Activated CD4-positive, alpha-beta memory T cell treated with anti-CD3 and anti-CD28 coated beads, Interleukin-2, amount 10 ng/mL, durations not matched to agents 7 days and 5 days (primary cell): ENCODE measurements at regions of chr11 and their contacts with region 1.

Region 1: GRCh38 chr11:9506489-9507276 is 45.9 kb downstream of the ZNF143 start:
- DNase-seq: peak; percentile 78
- H3K4me3 Mint-ChIP-seq: no peak overlapping the region
- H3K27ac Mint-ChIP-seq: no peak overlapping the region
- H3K4me1 Mint-ChIP-seq: peaks cover 12% of the 10 kb centered on the region
- H3K27me3 Mint-ChIP-seq: no peaks in the 10 kb centered on the region

Region 2: DNA sequence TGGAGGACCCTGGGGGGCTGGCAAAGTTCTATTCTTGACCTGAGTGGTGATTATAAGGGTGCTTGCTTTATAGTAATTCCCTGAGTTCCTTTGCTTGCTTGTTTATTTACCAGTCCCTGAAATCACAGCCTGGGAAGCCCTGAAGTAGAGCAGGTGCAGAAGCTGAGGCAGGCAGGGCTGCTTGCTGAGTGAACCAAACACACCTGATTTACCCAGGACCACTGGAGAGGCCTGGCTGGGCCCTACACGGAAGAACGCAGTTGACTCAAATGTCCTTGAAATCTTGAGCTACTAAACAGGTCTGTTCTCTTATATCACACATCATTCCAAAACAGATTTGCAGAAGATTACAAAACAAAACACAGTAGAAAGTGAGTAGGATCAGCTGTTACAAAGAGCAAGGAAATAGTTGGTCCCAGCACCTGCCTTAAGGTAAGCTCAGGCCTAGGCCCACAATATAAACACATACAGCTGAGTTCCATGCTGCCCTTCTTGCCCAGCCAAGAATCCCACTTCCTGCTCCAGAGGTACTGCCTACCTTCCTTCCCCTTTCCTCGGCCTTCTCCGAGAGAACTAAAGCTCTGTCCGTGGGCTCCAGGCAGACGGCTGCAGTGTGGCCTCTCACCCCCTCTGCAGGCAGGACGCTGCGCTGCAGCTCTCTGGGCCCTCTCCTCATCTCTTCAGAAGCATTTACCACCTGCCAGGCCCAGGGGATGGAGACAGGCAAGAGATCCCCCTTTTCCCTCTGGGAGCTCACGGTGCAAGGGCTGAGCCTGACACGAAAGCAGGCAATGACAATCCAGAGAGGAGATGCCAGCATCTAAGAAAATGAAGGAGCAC is 369.2 kb before region 1 on chr11:
- CTCF ChIA-PET with region 1: interaction called, 21 read pairs
- POLR2A ChIA-PET with region 1: no interaction called
- DNase-seq: peak; percentile 78
- H3K4me3 Mint-ChIP-seq: no peak overlapping the region
- H3K27ac Mint-ChIP-seq: no peak overlapping the region
- H3K4me1 Mint-ChIP-seq: peaks cover 36% of the 10 kb centered on the region
- H3K27me3 Mint-ChIP-seq: no peaks in the 10 kb centered on the region

Region 3: DNA sequence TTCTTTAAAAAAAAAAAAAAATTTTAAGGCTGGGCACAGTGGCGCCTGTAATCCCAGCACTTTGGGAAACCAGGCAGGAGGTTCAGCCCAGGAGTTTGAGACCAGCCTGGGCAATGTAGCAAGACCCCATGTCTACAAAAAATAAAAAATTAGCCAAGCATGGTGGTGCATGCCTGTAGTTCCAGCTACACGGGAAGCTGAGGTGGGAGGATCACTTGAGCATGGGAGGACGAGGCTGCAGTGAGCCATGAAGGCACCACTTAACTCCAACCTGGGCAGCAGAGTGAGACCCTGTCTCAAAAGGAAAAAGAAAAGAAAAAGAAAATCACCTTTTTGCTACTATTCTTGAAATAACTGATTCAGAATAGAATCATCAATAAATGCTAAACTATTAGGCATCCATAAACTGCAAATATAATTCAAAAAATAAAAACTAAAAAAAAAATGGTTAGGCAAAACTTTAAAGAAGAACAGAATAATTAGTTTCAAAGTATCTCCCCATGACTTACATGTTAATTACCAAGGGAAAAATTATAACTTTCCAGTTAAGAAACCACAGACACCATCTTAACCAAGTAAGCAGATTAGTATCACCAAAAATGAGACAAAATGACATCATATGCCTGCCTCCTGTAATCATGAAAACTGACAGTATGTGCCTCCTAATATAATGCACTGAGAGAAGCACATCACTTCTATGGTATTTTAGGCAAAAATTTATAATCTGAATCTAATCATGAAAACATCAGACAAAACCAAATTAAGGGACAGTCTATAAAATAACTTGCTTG is 305.1 kb before region 1 on chr11:
- CTCF ChIA-PET with region 1: no interaction called
- POLR2A ChIA-PET with region 1: no interaction called
- DNase-seq: no peak
- H3K4me3 Mint-ChIP-seq: no peak overlapping the region
- H3K27ac Mint-ChIP-seq: no peak overlapping the region
- H3K4me1 Mint-ChIP-seq: peaks cover 11% of the 10 kb centered on the region
- H3K27me3 Mint-ChIP-seq: no peaks in the 10 kb centered on the region

Region 4: GRCh38 chr11:9280655-9281301 is 225.9 kb before region 1 on chr11:
- CTCF ChIA-PET with region 1: interaction called, 14 read pairs
- POLR2A ChIA-PET with region 1: no interaction called
- DNase-seq: peak; percentile 73
- H3K4me3 Mint-ChIP-seq: no peak overlapping the region
- H3K27ac Mint-ChIP-seq: no peak overlapping the region
- H3K4me1 Mint-ChIP-seq: peaks cover 14% of the 10 kb centered on the region
- H3K27me3 Mint-ChIP-seq: peaks cover 6% of the 10 kb centered on the region

Region 5: GRCh38 chr11:9330387-9331384 is 176.0 kb before region 1 on chr11:
- CTCF ChIA-PET with region 1: no interaction called
- POLR2A ChIA-PET with region 1: no interaction called
- DNase-seq: no peak
- H3K4me3 Mint-ChIP-seq: no peak overlapping the region
- H3K27ac Mint-ChIP-seq: no peak overlapping the region
- H3K4me1 Mint-ChIP-seq: no peaks in the 10 kb centered on the region
- H3K27me3 Mint-ChIP-seq: no peaks in the 10 kb centered on the region

Region 6: DNA sequence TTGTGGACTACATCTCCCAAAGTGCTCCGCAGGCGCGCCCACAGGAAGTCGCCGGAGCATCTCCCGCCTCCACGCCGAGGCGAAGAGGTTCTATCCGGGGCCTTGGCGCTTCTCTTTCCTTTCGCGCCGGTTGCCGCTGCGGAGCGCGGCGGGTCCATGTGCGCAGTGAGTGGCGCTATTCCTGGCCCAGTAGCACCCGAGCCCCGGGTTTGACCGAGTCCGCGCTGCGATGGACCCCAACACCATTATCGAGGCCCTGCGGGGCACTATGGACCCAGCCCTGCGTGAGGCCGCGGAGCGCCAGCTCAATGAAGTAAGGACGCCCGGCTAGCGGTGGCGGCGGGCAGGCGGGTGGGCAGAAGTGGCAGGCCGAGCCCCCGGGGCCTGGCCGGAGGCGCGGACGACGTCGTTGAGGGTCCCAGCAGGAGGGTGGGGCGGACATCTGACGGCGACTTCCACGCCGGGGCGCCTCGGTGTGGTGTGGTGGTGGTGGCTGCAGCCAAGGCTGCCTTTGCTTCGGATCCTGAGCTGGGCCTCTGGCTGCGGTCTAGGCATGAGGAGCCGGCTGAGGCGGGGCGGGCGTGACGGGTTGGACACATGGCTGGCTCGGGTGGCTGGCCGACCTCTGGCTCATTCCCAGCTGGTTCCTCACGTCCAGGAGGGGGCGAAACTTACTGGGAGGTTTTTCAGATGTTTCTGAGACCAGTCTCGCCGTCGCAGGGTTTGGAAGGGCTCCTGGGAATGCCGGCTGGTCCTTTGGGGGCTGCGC is 122.0 kb before region 1 on chr11 and contains the start of gene IPO7:
- CTCF ChIA-PET with region 1: interaction called, 18 read pairs
- POLR2A ChIA-PET with region 1: interaction called, 3 read pairs
- DNase-seq: peak; percentile 92
- H3K4me3 Mint-ChIP-seq: peak within 1 kb of the TSS; percentile 85
- H3K27ac Mint-ChIP-seq: peak within 1 kb of the TSS; percentile 87
- H3K4me1 Mint-ChIP-seq: peaks cover 32% of the 10 kb centered on the region
- H3K27me3 Mint-ChIP-seq: no peaks in the 10 kb centered on the region
- total RNA-seq, gene IPO7: 87.4 to 95.7 TPM

Region 7: DNA sequence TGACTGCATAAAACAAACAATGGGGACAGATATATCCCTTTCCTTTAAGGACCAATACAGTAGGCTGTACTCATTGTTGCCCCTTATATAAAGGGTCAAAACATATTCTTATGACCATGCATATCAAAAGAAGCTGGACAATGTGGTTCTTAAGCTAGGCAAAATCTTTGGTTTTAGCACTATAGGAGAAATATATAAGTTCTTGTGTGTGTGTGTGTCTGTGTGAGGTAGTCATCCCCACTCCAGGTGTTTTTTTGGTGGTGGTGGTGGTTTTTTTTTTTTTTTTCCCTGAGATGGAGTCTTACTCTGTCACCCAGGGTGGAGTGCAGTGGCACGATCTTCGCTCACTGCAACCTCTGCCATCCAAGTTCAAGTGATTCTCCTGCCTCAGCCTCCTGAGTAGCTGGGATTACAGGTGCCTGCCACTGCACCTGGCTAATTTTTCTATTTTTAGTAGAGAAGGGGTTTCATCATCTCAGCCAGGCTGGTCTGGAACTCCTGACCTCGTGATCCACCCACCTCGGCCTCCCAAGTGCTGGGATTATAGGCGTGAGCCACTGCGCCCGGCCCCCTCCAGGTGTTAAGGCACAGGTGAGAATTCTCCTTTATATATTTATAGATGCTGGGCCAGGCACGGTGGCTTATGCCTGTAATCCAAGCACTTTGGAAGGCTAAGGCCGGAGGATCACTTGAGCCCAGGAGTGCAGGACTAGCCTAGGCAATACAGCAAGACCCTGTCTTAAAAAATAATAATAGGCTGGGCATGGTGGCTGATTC is 57.9 kb before region 1 on chr11:
- CTCF ChIA-PET with region 1: interaction called, 12 read pairs
- POLR2A ChIA-PET with region 1: no interaction called
- DNase-seq: no peak
- H3K4me3 Mint-ChIP-seq: no peak overlapping the region
- H3K27ac Mint-ChIP-seq: no peak overlapping the region
- H3K4me1 Mint-ChIP-seq: peaks cover 10% of the 10 kb centered on the region
- H3K27me3 Mint-ChIP-seq: no peaks in the 10 kb centered on the region

Region 8: GRCh38 chr11:9613118-9613829 is 106.6 kb after region 1 on chr11:
- CTCF ChIA-PET with region 1: interaction called, 11 read pairs
- POLR2A ChIA-PET with region 1: no interaction called
- DNase-seq: peak; percentile 88
- H3K4me3 Mint-ChIP-seq: peak overlapping the region; percentile 85
- H3K27ac Mint-ChIP-seq: peak overlapping the region; percentile 97
- H3K4me1 Mint-ChIP-seq: peaks cover 27% of the 10 kb centered on the region
- H3K27me3 Mint-ChIP-seq: peaks cover 3% of the 10 kb centered on the region

Region 9: GRCh38 chr11:9636691-9637090 is 130.0 kb after region 1 on chr11:
- CTCF ChIA-PET with region 1: no interaction called
- POLR2A ChIA-PET with region 1: no interaction called
- DNase-seq: no peak
- H3K4me3 Mint-ChIP-seq: no peak overlapping the region
- H3K27ac Mint-ChIP-seq: no peak overlapping the region
- H3K4me1 Mint-ChIP-seq: peaks cover 5% of the 10 kb centered on the region
- H3K27me3 Mint-ChIP-seq: no peaks in the 10 kb centered on the region